ENCODE measurements at regions of chr1 and their contacts with region 1.

Region 1: GRCh38 chr1:222654849-222655248 is 37.0 kb downstream of the MIA3 start:
- DNase-seq: no peak
- ATAC-seq: no peak
- H3K4me3 ChIP-seq: no peak overlapping the region
- H3K27ac ChIP-seq: no peak overlapping the region
- H3K4me1 ChIP-seq: no peaks in the 10 kb centered on the region
- H3K27me3 ChIP-seq: no peaks in the 10 kb centered on the region
- CTCF ChIP-seq: no peak
- POLR2A ChIP-seq: no peak
- RAD21 ChIP-seq: no peak

Region 2: DNA sequence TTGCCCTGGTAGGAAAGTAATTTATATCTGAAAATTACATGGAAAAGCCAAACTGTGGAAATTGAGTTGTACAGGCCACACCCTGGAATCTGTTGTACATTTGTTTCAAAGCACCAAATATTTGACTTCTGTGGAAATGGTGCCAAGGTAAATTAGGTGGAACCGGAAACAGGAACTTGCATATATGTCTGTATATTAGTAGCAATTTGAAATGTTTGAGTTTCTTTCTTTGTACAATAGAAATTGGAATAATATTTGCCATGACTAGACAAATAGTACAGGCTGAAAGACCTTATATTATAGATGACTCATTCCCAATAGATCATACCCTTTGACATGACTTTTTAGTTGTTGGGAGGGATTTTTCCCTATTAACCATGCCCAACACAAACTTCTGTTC is 54.6 kb before region 1 on chr1:
- CTCF ChIA-PET with region 1: no interaction called
- POLR2A ChIA-PET with region 1: no interaction called
- dilution Hi-C with region 1: no loop called
- in situ Hi-C with region 1: no loop called
- intact Hi-C with region 1: no loop called
- DNase-seq: no peak
- ATAC-seq: no peak
- H3K4me3 ChIP-seq: no peak overlapping the region
- H3K27ac ChIP-seq: no peak overlapping the region
- H3K4me1 ChIP-seq: peaks cover 1% of the 10 kb centered on the region; the same call in 1 of the 2 replicates
- H3K27me3 ChIP-seq: no peaks in the 10 kb centered on the region
- CTCF ChIP-seq: no peak
- POLR2A ChIP-seq: no peak
- RAD21 ChIP-seq: no peak

Region 3: DNA sequence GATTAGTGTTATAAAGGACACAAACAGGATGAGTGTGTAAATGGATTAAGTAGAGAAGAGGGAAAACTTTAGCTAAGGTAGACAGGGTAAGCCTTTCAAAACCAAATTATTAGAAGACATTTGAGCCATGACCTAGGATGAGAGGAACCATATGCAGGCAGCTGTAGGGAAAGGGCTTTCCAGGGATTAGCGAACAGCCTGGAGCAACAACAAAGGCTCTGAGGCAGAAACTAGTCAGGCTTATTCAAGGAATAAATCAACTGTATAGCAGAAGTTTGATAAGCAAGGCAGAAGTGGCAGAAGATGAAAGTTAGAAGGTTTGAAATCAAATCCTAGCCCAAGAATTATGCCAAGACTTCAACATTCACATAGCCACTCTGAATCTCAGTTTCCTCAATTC is 36.2 kb after region 1 on chr1:
- CTCF ChIA-PET with region 1: no interaction called
- POLR2A ChIA-PET with region 1: no interaction called
- dilution Hi-C with region 1: no loop called
- in situ Hi-C with region 1: no loop called
- intact Hi-C with region 1: loop called (anchors 5 kb)
- DNase-seq: no peak
- ATAC-seq: no peak
- H3K4me3 ChIP-seq: no peak overlapping the region
- H3K27ac ChIP-seq: no peak overlapping the region
- H3K4me1 ChIP-seq: no peaks in the 10 kb centered on the region
- H3K27me3 ChIP-seq: no peaks in the 10 kb centered on the region
- CTCF ChIP-seq: no peak
- POLR2A ChIP-seq: no peak
- RAD21 ChIP-seq: no peak